Dendritic cell treated with granulocyte-macrophage colony-stimulating factor and Interleukin-4, amounts not matched to agents 40 ng/mL and 50 ng/mL, for 4 days (primary cell): ENCODE measurements at regions of chr1 and their contacts with region 1.

Region 1: DNA sequence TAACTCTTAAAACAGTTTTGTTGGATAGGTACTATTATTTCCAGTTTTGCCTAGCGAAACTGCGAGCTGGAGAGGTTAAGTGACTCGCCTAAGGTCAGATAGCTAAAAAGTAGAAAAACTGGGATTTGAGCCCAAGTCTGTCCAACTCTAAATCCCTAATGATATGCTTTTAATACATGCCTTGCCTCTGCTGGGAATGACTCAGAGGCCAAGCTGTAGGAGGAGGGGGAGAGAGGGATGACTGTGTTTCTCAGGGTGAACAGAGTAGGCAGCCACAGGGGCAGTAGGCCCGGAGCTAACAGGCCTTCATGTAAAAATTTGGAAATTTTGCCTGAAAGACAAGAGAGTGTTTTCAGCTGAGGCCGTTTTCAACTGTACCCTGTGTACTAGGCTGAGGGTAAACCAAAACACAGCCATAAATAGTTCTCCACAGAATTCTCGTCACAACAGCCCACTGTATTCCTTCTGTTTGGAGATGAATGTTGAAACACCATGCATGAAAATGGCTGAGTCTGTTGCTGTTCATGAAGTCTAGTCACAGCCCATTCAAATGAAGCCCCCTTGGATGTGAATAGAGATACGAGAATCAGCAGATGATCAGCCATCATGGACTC is 107.5 kb upstream of the HOOK1 start:
- H3K4me3 Mint-ChIP-seq: no peak overlapping the region
- H3K27ac Mint-ChIP-seq: no peak overlapping the region
- H3K4me1 Mint-ChIP-seq: peaks cover 18% of the 10 kb centered on the region
- H3K27me3 Mint-ChIP-seq: no peaks in the 10 kb centered on the region

Region 2: DNA sequence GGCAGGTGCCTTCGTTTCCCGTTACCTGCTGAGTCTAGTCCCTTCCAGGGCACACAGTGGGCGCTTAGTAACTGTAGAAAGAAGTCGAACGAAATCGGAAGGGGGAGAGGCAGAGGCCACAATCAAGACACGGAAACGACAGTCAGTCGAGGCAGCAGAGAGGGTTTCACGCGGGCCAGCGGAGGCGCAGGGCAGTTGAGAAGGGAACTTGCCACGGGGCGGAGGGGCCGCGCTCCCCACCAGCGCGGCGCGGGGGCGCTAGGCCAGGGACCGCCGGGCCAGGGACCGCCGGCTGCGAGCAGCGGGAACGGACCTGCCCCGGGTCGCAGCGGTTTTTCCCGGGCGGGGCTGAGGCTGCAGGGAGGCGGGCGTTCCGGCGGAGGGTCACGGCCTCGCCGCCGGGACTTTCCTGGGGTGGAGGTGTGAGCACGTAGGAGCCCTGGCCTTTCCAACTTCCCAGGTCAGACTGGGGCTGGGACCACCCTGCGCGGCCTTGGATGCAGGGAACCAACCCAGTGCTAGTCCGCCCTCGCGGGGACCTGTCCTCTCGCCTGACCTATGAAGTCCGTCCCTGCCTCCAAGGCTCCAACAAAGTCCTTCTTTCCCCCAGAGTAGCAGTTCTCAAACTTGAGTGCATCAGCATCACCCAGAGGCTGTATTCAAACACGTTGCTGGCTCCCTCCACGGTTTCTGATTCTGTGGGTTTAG is 560.5 kb before region 1 on chr1:
- intact Hi-C with region 1: loop called (anchors 10 kb)
- H3K4me3 Mint-ChIP-seq: peak overlapping the region; percentile 87
- H3K27ac Mint-ChIP-seq: peak overlapping the region; percentile 72
- H3K4me1 Mint-ChIP-seq: peaks cover 39% of the 10 kb centered on the region
- H3K27me3 Mint-ChIP-seq: peaks cover 17% of the 10 kb centered on the region

Region 3: GRCh38 chr1:59498640-59499039 is 208.6 kb before region 1 on chr1:
- intact Hi-C with region 1: loop called (anchors 10 kb)
- H3K4me3 Mint-ChIP-seq: no peak overlapping the region
- H3K27ac Mint-ChIP-seq: no peak overlapping the region
- H3K4me1 Mint-ChIP-seq: peaks cover 40% of the 10 kb centered on the region
- H3K27me3 Mint-ChIP-seq: no peaks in the 10 kb centered on the region